Naive thymus-derived CD4-positive, alpha-beta T cell (primary cell): ENCODE measurements at regions of chr15 and their contacts with region 1.

Region 1: DNA sequence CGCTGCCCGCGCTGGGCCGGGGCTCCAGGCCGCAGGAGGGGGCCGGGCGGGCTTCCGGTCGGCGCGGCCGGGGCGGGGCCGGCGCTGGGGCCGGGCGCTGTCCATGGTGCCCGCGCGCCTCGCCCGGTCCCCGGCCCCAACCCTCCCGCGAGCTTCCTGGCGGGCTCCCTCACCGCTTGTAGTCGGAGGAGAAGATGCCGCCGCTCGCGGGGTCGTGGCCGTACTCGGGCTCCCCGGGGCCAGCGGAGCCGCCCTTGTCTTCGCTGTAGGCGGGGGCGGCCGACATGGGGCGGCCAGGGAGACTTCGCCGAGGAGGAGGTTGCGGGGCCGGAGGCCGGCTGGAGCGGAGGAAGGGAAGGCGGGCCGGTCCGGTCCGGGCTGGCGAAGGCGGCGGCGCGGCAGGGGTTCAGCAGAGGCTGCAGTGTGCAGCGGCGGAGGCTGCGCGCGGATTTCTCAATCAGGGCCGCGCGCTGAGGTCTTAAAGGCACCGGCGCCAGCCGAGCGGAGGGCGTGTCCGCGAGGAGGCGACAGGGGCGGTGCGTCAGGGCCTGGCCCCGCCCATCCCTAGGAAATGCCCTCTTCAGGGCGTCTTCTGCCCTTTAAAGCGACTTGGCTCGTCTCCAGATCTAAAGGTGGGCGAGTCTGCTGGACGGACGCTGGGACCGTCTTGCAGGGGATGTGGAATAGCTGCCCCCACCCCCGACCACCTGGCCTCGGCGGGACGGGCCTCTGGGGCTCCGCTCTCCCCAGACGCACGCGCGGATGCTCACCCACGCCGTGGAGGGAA is at the start of gene AP3B2:
- DNase-seq: peak; percentile 28 to 73 (median 56)
- ATAC-seq: peak; percentile 93
- H3K4me3 ChIP-seq: peak within 1 kb of the TSS; percentile 61
- H3K4me3 Mint-ChIP-seq: peak within 1 kb of the TSS in 9 of 10 donors; percentile 51 to 87 (median 67)
- H3K27ac ChIP-seq: peak within 1 kb of the TSS; percentile 7
- H3K27ac Mint-ChIP-seq: no peak within 1 kb of the TSS
- H3K4me1 ChIP-seq: peaks cover 0 to 4% of the 10 kb centered on the region in 2 donors
- H3K4me1 Mint-ChIP-seq: peaks cover 0 to 8% (median 0%) of the 10 kb centered on the region in 7 donors
- H3K27me3 ChIP-seq: peaks cover 0 to 2% of the 10 kb centered on the region in 2 donors
- H3K27me3 Mint-ChIP-seq: peaks cover 0 to 32% (median 18%) of the 10 kb centered on the region in 5 donors
- total RNA-seq, gene AP3B2: 0.56 to 1.2 (median 0.85) TPM in 4 of 5 experiments, not detected in the other

Region 2: DNA sequence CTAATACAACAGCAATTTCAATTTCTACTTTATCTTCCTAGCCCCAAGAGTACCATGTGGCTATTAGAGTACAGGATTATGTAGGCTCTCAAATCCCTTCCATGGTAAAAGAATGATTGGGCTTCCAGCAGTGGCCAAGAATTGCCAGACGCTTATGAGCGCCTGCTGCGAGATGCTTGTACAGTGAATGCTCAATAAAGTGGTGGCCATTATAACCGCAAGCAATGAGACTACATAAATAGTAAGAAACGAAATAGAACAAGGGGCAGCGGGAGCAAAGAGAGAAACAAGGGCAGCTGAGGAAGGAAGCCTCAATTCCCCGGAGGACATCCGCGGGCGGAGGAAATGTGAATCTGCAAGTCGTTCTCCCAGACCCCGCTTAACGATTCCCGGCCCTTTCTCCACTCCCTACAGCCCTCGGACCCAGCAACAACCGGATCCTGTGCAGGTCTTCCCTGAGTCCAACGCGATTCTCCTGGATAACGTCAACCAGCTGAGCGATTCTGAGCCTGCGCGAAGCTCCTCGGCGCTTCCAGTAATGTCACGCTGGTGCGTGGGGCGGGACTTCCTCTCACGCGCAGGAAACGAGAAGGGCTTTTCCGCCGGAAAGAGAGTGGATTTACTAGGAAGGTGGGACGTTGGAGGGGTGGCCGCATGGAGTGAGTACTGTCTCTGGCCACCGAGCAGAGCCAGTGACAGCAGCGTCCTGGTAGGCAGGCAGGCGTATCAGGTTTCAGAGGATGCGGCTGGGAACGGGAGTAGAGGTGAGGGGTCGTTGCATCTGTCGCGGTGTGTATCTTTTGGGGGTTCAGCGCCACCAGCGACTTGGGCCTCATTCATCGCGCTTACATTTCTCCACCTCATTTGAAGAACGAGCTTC is 40.6 kb after region 1 on chr15:
- CTCF ChIA-PET with region 1: no interaction called
- POLR2A ChIA-PET with region 1: interaction called, 3 read pairs
- intact Hi-C with region 1: loop called (anchors 1 kb)
- DNase-seq: peak; percentile 51 to 84 (median 70)
- ATAC-seq: peak; percentile 96
- H3K4me3 ChIP-seq: peak overlapping the region; percentile 88
- H3K4me3 Mint-ChIP-seq: peak overlapping the region; percentile 93 to 100 (median 98)
- H3K27ac ChIP-seq: peak overlapping the region; percentile 78
- H3K27ac Mint-ChIP-seq: peak overlapping the region; percentile 89 to 98 (median 95)
- H3K4me1 ChIP-seq: peaks cover 10 to 15% of the 10 kb centered on the region in 2 donors
- H3K4me1 Mint-ChIP-seq: peaks cover 26 to 69% (median 57%) of the 10 kb centered on the region in 7 donors
- H3K27me3 ChIP-seq: no peaks in the 10 kb centered on the region
- H3K27me3 Mint-ChIP-seq: no peaks in the 10 kb centered on the region

Region 3: DNA sequence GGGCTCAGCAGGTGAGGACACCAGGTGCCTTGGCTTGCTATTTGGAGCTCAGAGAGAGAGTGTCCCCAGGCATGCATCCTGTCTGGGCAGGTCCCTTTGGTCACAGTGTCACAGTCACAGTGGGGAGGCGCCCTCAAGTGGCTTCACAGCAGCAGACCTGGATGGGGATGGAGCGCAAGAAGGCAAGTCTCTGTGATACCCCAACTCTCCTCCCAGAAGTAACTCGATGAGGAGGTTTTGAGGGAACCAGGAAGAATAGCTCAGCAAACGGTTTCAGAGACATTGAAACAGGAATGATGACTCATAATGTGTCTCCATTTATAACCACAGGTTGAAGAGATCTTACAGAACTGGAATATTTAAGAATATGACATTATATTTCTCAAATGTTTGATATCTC is 671.1 kb after region 1 on chr15:
- CTCF ChIA-PET with region 1: no interaction called
- POLR2A ChIA-PET with region 1: no interaction called
- intact Hi-C with region 1: no loop called
- DNase-seq: peak in 2 of 9 donors; percentile 16 to 33
- ATAC-seq: peak; percentile 46
- H3K4me3 ChIP-seq: no peak overlapping the region
- H3K4me3 Mint-ChIP-seq: no peak overlapping the region
- H3K27ac ChIP-seq: no peak overlapping the region
- H3K27ac Mint-ChIP-seq: no peak overlapping the region
- H3K4me1 ChIP-seq: no peaks in the 10 kb centered on the region
- H3K4me1 Mint-ChIP-seq: peaks cover 0 to 6% (median 0%) of the 10 kb centered on the region in 7 donors
- H3K27me3 ChIP-seq: no peaks in the 10 kb centered on the region
- H3K27me3 Mint-ChIP-seq: peaks cover 37 to 55% (median 47%) of the 10 kb centered on the region in 5 donors